ENCODE measurements at regions of chr11 and their contacts with region 1.

Region 1: DNA sequence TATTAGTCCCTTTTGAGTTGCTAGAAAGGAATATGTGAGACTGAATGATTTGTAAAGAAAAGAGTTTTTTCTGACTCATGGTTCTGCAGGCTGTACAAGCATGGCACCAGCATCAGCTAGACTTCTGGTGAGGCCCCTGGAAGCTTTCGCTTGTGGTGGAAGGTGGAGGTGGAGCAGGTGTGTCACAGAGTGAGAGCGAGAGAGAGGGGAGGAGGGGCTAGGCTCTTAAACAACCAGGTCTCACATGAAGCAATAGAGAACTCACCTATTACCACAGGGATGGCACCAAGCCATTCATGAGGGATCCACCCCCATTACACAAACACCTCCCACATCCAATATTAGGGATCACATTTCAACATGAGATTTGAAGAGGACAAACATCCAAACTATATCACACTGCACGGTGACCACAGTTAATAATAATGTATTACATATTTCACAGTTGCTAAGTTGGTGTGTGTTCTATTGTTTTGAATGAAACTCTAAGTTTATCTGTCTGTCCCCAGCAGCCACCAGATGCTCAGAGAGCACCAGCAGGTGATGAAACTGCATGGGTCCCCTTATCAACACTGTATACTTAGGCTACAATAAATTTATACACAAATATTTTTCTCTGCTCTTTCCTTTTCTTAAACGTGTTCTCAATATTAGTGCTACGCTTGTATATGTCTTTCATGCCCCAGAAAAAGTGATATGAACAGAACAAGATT is 14.1 kb downstream of the ZFP91 start:
- DNase-seq: no peak
- H3K4me3 Mint-ChIP-seq: no peak overlapping the region
- H3K27ac Mint-ChIP-seq: peak overlapping the region; percentile 64
- H3K4me1 Mint-ChIP-seq: peaks cover 63% of the 10 kb centered on the region
- H3K27me3 Mint-ChIP-seq: no peaks in the 10 kb centered on the region

Region 2: DNA sequence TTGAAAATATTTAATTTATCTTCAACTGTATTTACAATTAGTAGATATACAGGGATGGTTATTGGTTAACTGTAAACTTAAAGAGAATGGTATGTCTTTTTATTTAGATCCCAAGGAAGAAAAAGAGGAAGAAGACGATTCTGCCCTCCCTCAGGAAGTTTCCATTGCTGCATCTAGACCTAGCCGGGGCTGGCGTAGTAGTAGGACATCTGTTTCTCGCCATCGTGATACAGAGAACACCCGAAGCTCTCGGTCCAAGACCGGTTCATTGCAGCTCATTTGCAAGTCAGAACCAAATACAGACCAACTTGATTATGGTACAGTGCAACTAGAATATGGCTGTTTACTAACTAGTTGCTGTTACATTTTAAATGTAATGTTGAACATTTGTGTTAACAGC is 16.8 kb after region 1 on chr11:
- intact Hi-C with region 1: loop called (anchors 2 kb)
- DNase-seq: no peak
- H3K4me3 Mint-ChIP-seq: no peak overlapping the region
- H3K27ac Mint-ChIP-seq: no peak overlapping the region
- H3K4me1 Mint-ChIP-seq: peaks cover 60% of the 10 kb centered on the region
- H3K27me3 Mint-ChIP-seq: no peaks in the 10 kb centered on the region

Region 3: GRCh38 chr11:58927393-58928106 is 334.6 kb after region 1 on chr11:
- intact Hi-C with region 1: no loop called
- DNase-seq: no peak
- H3K4me3 Mint-ChIP-seq: no peak overlapping the region
- H3K27ac Mint-ChIP-seq: no peak overlapping the region
- H3K4me1 Mint-ChIP-seq: peaks cover 15% of the 10 kb centered on the region
- H3K27me3 Mint-ChIP-seq: peaks cover 6% of the 10 kb centered on the region